ENCODE measurements at regions of chr3 and their contacts with region 1.

Region 1: GRCh38 chr3:186259612-186260383 is 102.2 kb downstream of the DGKG start:
- DNase-seq: peak; percentile 37 to 72
- ATAC-seq: peak; percentile 86 to 93 (median 91)
- H3K4me3 ChIP-seq: no peak overlapping the region
- H3K27ac ChIP-seq: no peak overlapping the region
- H3K4me1 ChIP-seq: peaks cover 0 to 9% (median 0%) of the 10 kb centered on the region in 9 donors
- H3K27me3 ChIP-seq: no peaks in the 10 kb centered on the region
- CTCF ChIP-seq: peak; percentile 61 to 91 (median 81)

Region 2: DNA sequence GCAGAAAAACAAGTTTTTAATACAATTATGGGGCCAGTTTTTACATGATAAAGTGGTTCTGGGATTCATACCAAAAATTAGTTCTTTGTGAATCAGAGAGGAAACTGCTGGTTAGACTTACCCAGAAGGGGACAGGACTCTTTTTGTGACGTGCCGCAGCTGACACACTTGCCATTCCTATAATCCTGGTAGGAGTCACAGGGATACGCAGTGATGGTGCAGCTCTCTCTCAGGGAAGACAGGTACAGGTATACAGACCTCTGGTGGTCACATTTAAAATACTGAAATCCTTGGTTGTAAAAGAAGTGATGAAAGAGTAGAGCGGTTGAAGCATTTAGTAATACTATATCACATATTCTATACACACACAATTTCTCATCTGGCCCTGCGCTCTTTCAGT is 740.8 kb before region 1 on chr3:
- intact Hi-C with region 1: no loop called
- DNase-seq: no peak
- ATAC-seq: no peak
- H3K4me3 ChIP-seq: no peak overlapping the region
- H3K27ac ChIP-seq: no peak overlapping the region
- H3K4me1 ChIP-seq: peaks cover 0 to 8% (median 0%) of the 10 kb centered on the region in 9 donors
- H3K27me3 ChIP-seq: peaks cover 0 to 4% (median 0%) of the 10 kb centered on the region in 7 donors
- CTCF ChIP-seq: no peak

Region 3: GRCh38 chr3:186487819-186488218 is 228.0 kb after region 1 on chr3:
- intact Hi-C with region 1: loop called in 1 of 10 experiments (anchors 5 kb)
- DNase-seq: no peak
- ATAC-seq: peak in 5 of 8 donors; percentile 41 to 77 (median 65)
- H3K4me3 ChIP-seq: no peak overlapping the region
- H3K27ac ChIP-seq: no peak overlapping the region
- H3K4me1 ChIP-seq: peaks cover 0 to 6% (median 0%) of the 10 kb centered on the region in 9 donors
- H3K27me3 ChIP-seq: no peaks in the 10 kb centered on the region
- CTCF ChIP-seq: peak in 7 of 9 donors; percentile 9 to 46 (median 32)

Region 4: GRCh38 chr3:186534113-186534669 is 274.4 kb after region 1 on chr3:
- intact Hi-C with region 1: loop called in 3 of 10 experiments (anchors 5 to 10 kb)
- DNase-seq: no peak
- ATAC-seq: peak in 6 of 8 donors; percentile 35 to 80 (median 64)
- H3K4me3 ChIP-seq: no peak overlapping the region
- H3K27ac ChIP-seq: peak overlapping the region in 1 of 10 donors; percentile 46
- H3K4me1 ChIP-seq: peaks cover 0 to 15% (median 7%) of the 10 kb centered on the region in 9 donors
- H3K27me3 ChIP-seq: no peaks in the 10 kb centered on the region
- CTCF ChIP-seq: no peak

Region 5: GRCh38 chr3:186540221-186540834 is 280.5 kb after region 1 on chr3:
- intact Hi-C with region 1: loop called (anchors 1 to 10 kb)
- DNase-seq: peak in 1 of 2 donors; percentile 67
- ATAC-seq: peak in 7 of 8 donors; percentile 67 to 87 (median 82)
- H3K4me3 ChIP-seq: peak overlapping the region in 2 of 10 donors; percentile 3 to 27
- H3K27ac ChIP-seq: peak overlapping the region in 1 of 10 donors; percentile 21
- H3K4me1 ChIP-seq: peaks cover 2 to 25% (median 9%) of the 10 kb centered on the region in 9 donors
- H3K27me3 ChIP-seq: no peaks in the 10 kb centered on the region
- CTCF ChIP-seq: peak; percentile 51 to 83 (median 71)

Measured in heart right ventricle (tissue), 16 donors.